ENCODE measurements at regions of chr5 and their contacts with region 1.

Region 1: DNA sequence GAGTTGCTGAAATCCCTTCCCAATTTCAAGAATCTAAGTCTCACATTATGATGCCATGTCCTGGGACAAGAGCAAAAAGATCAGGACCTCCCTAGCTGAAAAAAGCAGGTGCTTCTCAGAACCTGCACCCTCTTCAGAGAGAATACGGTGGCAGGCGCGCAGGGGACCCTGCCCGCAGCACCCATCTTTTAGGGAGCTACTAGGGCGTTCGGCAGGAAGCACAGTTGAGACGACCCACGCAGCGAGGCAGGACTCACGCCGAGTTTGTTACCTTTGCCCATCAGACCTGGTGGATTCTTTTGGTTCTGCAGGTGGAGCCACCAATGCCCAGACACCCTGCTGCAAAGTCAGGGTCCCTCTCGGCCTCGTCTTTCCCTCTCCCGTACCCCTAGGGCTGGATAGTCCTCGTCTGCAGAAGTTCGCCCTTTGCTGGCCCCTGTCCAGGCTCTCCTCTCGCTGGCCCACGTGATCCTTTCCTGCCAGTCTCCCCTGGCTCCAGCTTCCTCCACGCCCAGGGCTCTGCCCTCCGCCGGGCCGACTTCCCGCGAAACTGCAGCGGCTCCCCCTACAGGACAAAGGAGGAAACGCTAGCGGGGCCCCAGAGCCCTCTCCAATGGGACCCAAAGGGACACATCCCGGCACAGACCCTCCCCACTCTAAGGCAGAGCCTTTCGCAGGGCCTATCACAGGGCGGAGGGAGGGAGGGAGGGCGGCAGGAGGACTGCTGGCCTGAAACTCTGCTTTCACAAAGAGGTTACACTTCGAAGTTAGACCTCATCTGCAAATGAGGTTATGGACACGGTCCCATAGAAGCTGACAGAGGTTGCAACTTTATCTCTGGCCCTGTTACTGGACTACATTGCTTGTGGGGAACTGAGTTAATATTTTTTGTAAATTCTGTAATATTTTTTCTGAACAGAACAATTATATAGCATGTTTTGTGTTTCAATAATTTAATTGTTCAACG is 28.8 kb downstream of the TMEM174 start:
- DNase-seq: peak; percentile 94
- H3K27ac ChIP-seq: no peak overlapping the region
- CTCF ChIP-seq: peak; percentile 91

Region 2: GRCh38 chr5:73081093-73081492 is 120.7 kb before region 1 on chr5:
- CTCF ChIA-PET with region 1: interaction called, 10 read pairs
- POLR2A ChIA-PET with region 1: no interaction called
- DNase-seq: no peak
- H3K27ac ChIP-seq: no peak overlapping the region
- CTCF ChIP-seq: no peak